Lower leg skin (tissue), 4 donors: ENCODE measurements at regions of chr16 and their contacts with region 1.

Region 1: DNA sequence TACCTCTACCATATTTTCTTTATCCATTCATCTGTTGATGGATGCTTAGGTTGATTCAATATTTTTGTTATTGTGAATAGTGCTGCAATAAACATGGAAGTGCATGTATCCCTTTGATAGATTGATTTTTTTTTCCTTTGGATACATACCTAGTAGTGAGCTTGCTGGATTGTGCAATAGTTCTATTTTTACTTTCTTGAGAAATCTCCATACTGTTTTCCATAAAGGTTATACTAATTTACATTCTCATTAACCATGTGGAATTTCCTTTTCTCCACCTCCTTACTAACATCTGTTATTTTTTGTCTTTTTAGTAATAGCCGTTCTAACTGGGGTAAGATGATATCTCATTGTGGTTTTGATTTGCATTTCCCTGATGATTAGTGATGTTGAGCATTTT is 124.6 kb upstream of the TOX3 start:
- DNase-seq: no peak
- H3K4me3 ChIP-seq: no peak overlapping the region
- CTCF ChIP-seq: no peak
- POLR2A ChIP-seq: no peak

Region 2: DNA sequence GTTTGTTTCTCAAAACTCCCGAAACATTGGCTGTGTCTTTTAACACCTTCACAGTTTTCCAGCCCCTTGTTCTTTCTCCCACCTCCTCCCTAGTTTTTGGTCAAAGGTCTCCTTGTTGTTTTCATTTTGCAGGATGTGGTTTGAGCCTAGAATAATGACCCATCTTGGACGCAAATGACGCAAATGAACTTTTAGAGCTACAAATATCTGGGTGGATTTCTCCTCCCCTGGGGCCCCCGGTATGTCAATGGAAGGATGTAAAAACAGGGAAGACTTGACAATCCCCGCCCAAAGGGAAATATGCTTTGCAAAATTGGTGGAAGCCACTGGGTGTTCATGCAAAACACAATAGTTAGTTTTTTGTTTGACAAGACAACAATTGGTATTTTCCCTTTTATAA is 1851.0 kb after region 1 on chr16:
- intact Hi-C with region 1: loop called (anchors 5 kb)
- DNase-seq: no peak
- H3K4me3 ChIP-seq: no peak overlapping the region
- CTCF ChIP-seq: no peak
- POLR2A ChIP-seq: no peak